Colonic mucosa (tissue), 4 donors: ENCODE measurements at regions of chr1 and their contacts with region 1.

Region 1: DNA sequence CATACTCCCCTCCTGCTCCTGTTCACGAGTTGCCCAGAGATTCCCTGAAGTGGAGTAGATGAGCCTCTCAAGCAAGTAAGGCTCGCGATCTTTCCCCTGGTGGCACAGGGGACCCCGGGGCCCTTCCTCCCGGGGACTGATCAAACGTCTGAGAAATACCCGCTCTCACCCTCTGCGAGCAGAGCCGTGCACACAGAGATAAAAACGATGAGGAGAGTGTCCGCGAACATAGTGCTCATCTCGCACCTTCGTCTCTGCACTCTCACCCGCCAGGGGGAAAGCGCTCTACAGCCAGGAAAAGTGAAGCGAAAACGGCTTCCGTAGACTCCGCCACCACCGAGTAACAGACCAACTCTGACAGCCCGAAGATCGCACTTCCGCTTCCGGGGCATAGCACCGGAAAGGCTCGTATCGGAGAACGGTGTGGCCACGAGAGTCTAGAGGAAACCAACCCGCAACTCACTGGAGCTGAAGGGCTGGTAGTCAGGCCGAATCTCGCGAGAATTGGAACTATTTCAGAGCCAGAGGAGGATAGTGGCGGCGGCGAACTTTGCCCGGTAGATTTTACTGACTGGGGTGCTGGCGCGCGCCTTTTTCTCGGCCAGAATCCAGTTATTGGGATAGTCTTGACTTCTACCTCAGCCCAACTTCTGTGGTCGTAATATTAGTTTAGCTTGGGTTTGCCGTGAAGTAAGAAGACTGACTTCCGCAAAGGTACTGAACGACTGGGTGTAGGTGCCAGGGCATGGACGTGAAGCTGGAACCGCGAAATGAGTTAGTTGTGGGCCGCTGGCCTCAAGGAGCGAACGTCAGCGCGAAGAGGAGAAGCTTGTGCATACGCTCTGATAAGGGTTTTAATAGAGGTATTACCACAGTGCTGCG is at the start of gene TMCO1:
- DNase-seq: peak; percentile 98
- H3K4me3 ChIP-seq: peak within 1 kb of the TSS; percentile 69
- H3K27ac ChIP-seq: peak within 1 kb of the TSS; percentile 88
- H3K4me1 ChIP-seq: peaks cover 3% of the 10 kb centered on the region
- H3K27me3 ChIP-seq: no peaks in the 10 kb centered on the region
- CTCF ChIP-seq: no peak
- total RNA-seq, gene TMCO1: 149 to 173 TPM

Region 2: DNA sequence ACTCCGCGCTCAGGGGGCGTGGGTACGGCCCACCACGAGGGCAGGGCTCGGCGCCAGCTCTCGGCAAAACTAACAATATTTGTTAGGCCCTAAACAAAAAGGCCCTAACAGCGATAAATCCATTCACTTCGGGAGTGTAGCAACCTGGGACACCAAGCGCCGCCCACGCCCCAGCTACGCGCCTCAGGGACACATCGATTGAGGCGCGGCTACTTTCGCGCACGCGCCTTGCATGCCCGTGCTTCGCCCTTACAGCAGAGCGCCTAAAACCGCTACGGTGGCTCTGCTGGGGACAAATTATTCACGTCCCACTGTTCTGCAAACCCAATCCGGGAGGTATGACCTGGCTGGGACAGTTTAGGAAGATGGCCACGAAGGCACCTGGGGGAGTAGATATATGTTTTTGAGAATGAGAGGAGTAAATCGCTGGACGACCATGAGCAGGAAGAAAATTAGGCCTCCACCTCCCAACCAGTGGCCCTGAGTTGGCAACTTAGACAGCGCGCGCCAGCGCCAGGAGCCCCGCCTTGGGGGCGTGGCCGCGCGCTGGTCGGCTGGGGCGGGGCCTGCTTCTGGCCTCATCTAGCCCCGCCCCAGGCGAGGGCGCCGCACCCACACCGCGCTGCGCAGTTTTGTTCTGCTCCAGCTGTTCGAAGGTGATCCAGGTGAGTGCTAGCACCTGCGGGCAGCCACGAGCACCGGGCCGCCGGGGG is 138.0 kb before region 1 on chr1 and contains the start of gene MGST3:
- intact Hi-C with region 1: loop called (anchors 10 kb)
- DNase-seq: peak; percentile 96
- H3K4me3 ChIP-seq: peak within 1 kb of the TSS; percentile 62
- H3K27ac ChIP-seq: peak within 1 kb of the TSS; percentile 88
- H3K4me1 ChIP-seq: peaks cover 8% of the 10 kb centered on the region
- H3K27me3 ChIP-seq: no peaks in the 10 kb centered on the region
- CTCF ChIP-seq: no peak
- total RNA-seq, gene MGST3: 338 to 410 TPM